ENCODE measurements at regions of chr3 and their contacts with region 1.

Region 1: GRCh38 chr3:197256836-197257444 is 41.5 kb downstream of the DLG1 start:
- DNase-seq: no peak
- H3K4me3 Mint-ChIP-seq: no peak overlapping the region
- H3K27ac Mint-ChIP-seq: no peak overlapping the region
- H3K4me1 Mint-ChIP-seq: peaks cover 37% of the 10 kb centered on the region
- H3K27me3 Mint-ChIP-seq: no peaks in the 10 kb centered on the region

Region 2: DNA sequence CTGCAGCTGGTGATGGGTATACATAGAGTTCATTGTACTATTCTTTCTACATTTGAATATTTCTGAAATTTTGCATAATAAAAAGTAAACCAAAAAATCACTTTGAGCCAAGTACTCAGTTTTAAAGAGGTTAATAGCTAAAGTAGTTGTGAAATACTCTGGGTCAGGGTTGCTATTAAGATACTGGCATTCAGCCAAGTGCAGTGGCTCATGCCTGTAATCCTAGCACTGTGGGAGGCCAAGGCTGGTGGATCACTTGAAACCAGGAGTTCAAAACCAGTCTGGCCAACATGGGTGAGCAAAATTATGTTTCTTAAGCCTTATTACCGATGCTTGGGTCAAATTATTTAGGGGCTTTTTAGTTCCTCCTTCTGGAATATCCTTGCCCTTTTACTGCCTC is 105.4 kb before region 1 on chr3:
- intact Hi-C with region 1: no loop called
- DNase-seq: no peak
- H3K4me3 Mint-ChIP-seq: no peak overlapping the region
- H3K27ac Mint-ChIP-seq: no peak overlapping the region
- H3K4me1 Mint-ChIP-seq: peaks cover 2% of the 10 kb centered on the region
- H3K27me3 Mint-ChIP-seq: no peaks in the 10 kb centered on the region

Region 3: DNA sequence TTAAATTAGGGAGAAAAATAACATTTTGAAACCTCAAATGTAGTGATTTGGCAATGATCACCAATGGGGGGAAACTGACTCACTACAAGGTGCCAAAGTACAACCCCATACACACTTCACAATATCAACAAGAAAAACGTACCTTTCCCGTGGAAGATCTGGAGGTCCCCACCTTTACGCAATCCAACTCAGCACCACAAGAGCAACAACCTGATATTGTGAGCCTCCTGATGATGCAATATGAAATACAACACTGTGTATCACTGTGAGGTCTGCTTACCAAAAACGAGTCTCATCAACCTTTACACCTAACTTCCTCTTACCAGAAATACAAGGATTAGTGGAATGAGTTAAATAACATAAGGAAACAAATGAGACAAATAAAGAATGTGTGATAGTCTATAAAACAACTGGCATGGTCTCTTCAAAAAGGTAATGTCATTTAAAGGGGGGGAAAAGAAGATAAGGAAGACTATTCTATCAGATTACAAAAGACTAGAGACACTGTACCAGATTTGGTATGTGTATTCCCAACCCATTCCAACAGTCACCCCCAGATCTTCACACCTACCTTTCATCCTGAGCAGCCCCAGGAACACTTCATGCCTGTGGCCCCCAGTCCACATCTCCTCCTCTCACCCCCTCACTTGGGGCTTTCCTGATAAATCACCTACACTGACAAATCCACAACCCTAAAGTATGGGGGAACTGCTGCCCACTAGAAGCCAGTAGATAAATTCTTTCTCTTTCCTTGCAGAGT is 13.8 kb after region 1 on chr3:
- intact Hi-C with region 1: no loop called
- DNase-seq: no peak
- H3K4me3 Mint-ChIP-seq: no peak overlapping the region
- H3K27ac Mint-ChIP-seq: no peak overlapping the region
- H3K4me1 Mint-ChIP-seq: peaks cover 28% of the 10 kb centered on the region
- H3K27me3 Mint-ChIP-seq: no peaks in the 10 kb centered on the region

Region 4: DNA sequence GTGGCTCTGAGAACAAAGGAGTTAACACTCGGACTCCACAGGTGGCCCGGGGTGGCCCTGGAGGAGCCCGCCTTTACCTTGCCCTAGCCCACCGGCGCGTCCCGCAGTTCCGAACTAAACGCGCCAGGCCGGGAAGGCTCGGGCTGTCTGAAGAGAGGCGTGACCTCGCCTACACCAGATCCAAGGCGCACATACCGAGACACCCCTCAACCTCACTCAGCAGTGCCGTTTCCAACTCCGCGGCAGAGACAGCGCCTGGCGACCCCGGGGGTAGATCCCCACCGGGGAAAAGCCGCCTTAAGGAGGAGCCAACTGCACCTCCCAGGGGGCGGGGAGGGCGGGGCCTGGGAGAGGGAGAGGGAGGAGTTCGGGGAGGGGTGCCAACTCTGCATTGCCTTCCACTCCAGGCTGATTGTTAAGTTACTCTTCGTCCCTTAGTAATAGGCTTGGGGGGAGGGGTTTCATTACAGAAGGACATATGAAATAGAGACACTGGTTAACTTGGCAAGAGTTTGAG is 41.5 kb after region 1 on chr3 and contains the start of gene DLG1:
- intact Hi-C with region 1: loop called (anchors 5 kb)
- DNase-seq: no peak
- H3K4me3 Mint-ChIP-seq: peak within 1 kb of the TSS; percentile 91
- H3K27ac Mint-ChIP-seq: peak within 1 kb of the TSS; percentile 95
- H3K4me1 Mint-ChIP-seq: peaks cover 22% of the 10 kb centered on the region
- H3K27me3 Mint-ChIP-seq: peaks cover 27% of the 10 kb centered on the region
- total RNA-seq, gene DLG1: 77.5 and 84.1 TPM in 2 replicates

Region 5: GRCh38 chr3:197456261-197457091 is 199.5 kb after region 1 on chr3:
- intact Hi-C with region 1: loop called (anchors 5 kb)
- DNase-seq: peak; percentile 26
- H3K4me3 Mint-ChIP-seq: peak overlapping the region; percentile 86
- H3K27ac Mint-ChIP-seq: peak overlapping the region; percentile 79
- H3K4me1 Mint-ChIP-seq: peaks cover 12% of the 10 kb centered on the region
- H3K27me3 Mint-ChIP-seq: peaks cover 20% of the 10 kb centered on the region

Region 6: DNA sequence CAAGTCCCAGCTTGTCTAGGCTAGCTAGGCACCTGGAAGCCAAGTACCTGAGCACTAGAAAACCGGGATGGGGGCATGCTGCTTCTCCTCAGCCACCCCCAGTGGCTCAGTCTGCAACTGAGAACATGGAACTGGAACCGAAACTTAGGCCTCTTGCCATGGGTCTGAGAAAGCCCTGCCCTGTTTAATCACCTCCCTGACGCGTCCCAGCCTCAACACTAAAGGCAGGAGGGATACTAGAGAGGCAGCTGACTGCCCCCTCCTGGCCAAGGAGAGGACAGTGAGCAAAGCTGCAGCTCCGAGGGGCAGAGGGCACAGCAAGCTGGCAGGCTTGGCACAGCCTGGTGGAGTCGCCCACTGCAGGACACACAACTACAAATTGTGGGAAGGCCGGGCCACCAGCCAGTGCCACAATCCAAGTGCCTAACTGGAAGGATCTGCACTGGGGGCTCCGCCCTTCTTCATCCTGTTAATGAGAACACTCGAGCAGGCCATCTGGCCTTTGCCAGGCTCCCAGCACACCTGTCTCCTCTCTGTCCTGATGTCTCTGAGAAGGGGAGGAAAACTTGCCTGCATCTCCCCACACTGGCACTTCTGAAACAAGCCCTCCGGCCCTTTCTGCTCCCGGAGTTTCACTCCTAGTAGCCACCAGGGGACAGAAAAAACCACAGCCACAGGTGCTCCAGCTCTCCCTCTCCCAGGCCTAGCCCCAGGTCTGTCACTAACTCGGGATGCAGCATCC is 245.1 kb after region 1 on chr3:
- intact Hi-C with region 1: loop called (anchors 2 kb)
- DNase-seq: peak; percentile 31
- H3K4me3 Mint-ChIP-seq: no peak overlapping the region
- H3K27ac Mint-ChIP-seq: no peak overlapping the region
- H3K4me1 Mint-ChIP-seq: no peaks in the 10 kb centered on the region
- H3K27me3 Mint-ChIP-seq: no peaks in the 10 kb centered on the region